Psoas muscle (tissue), 8 donors: ENCODE measurements at regions of chr11 and their contacts with region 1.

Region 1: DNA sequence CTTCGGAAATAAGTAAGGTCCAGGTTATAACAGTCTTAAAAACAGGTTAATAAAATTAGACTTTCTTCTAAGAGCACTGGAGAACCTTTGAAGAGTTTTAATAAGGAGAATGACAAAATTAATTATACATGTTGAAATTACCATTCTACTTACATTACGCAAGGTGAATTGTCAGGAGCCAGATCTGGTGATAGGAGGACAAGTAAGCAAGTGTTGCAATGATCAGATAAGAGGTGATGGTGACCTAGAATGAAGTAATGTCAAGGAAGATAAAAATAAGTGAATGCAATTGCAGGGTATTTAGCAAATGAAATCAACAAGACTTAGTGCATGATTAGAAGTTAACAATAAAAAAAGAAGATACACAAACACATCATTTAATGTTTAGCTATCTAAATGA is 650.9 kb upstream of the LRRC4C start:
- DNase-seq: no peak
- ATAC-seq: no peak
- H3K4me3 ChIP-seq: no peak overlapping the region
- H3K27ac ChIP-seq: no peak overlapping the region
- H3K4me1 ChIP-seq: no peaks in the 10 kb centered on the region
- H3K27me3 ChIP-seq: no peaks in the 10 kb centered on the region
- CTCF ChIP-seq: no peak

Region 2: GRCh38 chr11:41346042-41346441 is 764.3 kb before region 1 on chr11:
- intact Hi-C with region 1: loop called in 1 of 2 experiments (anchors 5 kb)
- DNase-seq: no peak
- ATAC-seq: no peak
- H3K4me3 ChIP-seq: no peak overlapping the region
- H3K27ac ChIP-seq: no peak overlapping the region
- H3K4me1 ChIP-seq: no peaks in the 10 kb centered on the region
- H3K27me3 ChIP-seq: no peaks in the 10 kb centered on the region
- CTCF ChIP-seq: no peak